Left ventricle myocardium inferior (tissue), 1 donor: ENCODE measurements at regions of chr9 and their contacts with region 1.

Region 1: DNA sequence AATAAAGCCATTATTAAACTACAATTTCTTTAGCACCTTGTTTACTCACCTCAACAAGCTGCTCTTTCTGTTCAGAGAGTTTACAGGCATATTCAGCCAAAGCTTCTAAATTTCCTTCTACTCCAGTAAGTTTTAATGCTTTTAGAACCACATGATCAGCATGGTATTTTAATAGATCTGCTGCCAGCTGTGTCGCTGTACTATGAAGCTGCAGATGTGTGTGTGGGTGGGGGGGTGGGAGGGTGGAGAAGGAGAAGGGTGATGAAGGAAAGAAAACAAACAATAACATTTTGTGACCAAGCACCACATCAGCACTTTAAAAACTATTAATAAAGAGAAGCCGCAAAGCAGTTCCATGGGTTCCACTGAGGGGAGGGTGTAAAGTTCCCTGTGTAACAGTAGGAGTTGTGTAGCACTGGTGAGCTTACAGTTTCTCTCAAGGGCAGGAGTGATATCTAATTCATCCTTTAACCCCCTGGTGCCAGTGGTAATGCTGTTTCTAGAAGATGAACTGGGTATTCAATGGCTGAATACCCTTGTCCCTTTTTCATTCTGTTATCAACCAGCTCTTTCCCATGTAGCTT is 38.5 kb downstream of the ABITRAM start:
- DNase-seq: no peak
- H3K4me3 ChIP-seq: peak overlapping the region; percentile 13
- H3K27ac ChIP-seq: peak overlapping the region; percentile 79
- H3K4me1 ChIP-seq: peaks cover 43% of the 10 kb centered on the region
- H3K27me3 ChIP-seq: no peaks in the 10 kb centered on the region
- CTCF ChIP-seq: no peak

Region 2: GRCh38 chr9:109012876-109013678 is 40.4 kb after region 1 on chr9 and contains the start of gene CTNNAL1:
- intact Hi-C with region 1: loop called (anchors 5 kb)
- DNase-seq: peak; percentile 97
- H3K4me3 ChIP-seq: peak within 1 kb of the TSS; percentile 87
- H3K27ac ChIP-seq: peak within 1 kb of the TSS; percentile 96
- H3K4me1 ChIP-seq: peaks cover 71% of the 10 kb centered on the region
- H3K27me3 ChIP-seq: no peaks in the 10 kb centered on the region
- CTCF ChIP-seq: no peak
- total RNA-seq, gene CTNNAL1: 78.2 TPM

Region 3: DNA sequence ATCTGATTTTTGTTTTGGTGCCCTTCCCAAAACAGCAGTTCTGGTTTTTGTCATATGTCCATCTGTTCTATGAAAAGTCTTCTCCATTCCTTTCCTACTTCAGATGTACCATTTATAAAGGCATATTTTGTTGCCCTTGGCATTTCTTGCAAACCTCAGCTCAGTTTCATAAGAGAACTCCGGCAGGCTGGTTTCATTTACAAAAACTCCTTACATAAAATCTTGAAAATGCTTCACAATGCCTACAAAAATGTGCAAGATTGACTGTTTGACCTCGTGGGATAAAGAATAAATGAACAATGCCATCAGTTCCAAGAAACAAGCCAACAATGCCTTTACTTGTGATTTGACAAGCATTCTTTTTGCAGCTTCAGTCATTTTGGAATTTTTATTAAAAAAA is 79.7 kb after region 1 on chr9:
- intact Hi-C with region 1: no loop called
- DNase-seq: no peak
- H3K4me3 ChIP-seq: no peak overlapping the region
- H3K27ac ChIP-seq: no peak overlapping the region
- H3K4me1 ChIP-seq: peaks cover 34% of the 10 kb centered on the region
- H3K27me3 ChIP-seq: no peaks in the 10 kb centered on the region
- CTCF ChIP-seq: no peak